Dendritic cell treated with granulocyte-macrophage colony-stimulating factor and Interleukin-4, amounts not matched to agents 40 ng/mL and 50 ng/mL, for 4 days (primary cell): ENCODE measurements at regions of chr1 and their contacts with region 1.

Region 1: GRCh38 chr1:225977937-225978748 is 21.0 kb downstream of the SDE2 start:
- H3K4me3 Mint-ChIP-seq: no peak overlapping the region
- H3K27ac Mint-ChIP-seq: peak overlapping the region; percentile 2
- H3K4me1 Mint-ChIP-seq: peaks cover 30% of the 10 kb centered on the region
- H3K27me3 Mint-ChIP-seq: no peaks in the 10 kb centered on the region

Region 2: GRCh38 chr1:225318706-225319575 is 659.2 kb before region 1 on chr1:
- intact Hi-C with region 1: loop called (anchors 2 kb)
- H3K4me3 Mint-ChIP-seq: no peak overlapping the region
- H3K27ac Mint-ChIP-seq: no peak overlapping the region
- H3K4me1 Mint-ChIP-seq: peaks cover 15% of the 10 kb centered on the region
- H3K27me3 Mint-ChIP-seq: no peaks in the 10 kb centered on the region

Region 3: GRCh38 chr1:225474986-225475820 is 502.9 kb before region 1 on chr1:
- intact Hi-C with region 1: loop called (anchors 1 kb)
- H3K4me3 Mint-ChIP-seq: no peak overlapping the region
- H3K27ac Mint-ChIP-seq: peak overlapping the region; percentile 65
- H3K4me1 Mint-ChIP-seq: peaks cover 26% of the 10 kb centered on the region
- H3K27me3 Mint-ChIP-seq: peaks cover 9% of the 10 kb centered on the region

Region 4: DNA sequence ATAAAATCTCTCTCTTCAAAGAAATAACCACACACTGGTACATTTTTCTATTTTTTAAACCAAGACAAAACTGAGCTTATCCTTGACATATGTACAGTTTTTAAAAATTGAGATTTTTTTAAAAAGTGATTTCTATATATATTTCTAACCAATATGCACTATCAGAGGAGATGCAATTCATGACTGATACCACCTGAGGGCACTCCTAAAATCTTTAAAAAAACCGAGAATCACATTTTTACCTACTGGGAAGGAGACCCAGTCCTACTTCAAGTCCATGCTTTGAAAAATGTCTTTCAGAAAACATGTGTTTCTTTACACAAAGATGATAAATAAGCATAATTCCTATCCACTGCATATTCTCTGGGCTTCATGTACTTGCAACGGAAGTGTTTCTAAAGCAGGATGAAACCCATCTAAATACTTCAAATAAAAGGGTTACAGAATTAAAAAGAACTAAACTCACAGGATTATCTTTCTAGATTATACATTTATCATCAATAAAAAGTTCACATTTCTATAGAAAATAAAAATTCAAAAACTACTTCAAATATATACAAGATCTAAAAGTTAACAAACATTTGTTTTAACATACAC is 423.8 kb before region 1 on chr1:
- intact Hi-C with region 1: loop called (anchors 5 kb)
- H3K4me3 Mint-ChIP-seq: no peak overlapping the region
- H3K27ac Mint-ChIP-seq: no peak overlapping the region
- H3K4me1 Mint-ChIP-seq: peaks cover 2% of the 10 kb centered on the region
- H3K27me3 Mint-ChIP-seq: no peaks in the 10 kb centered on the region

Region 5: GRCh38 chr1:225772323-225772768 is 205.8 kb before region 1 on chr1:
- intact Hi-C with region 1: loop called (anchors 5 kb)
- H3K4me3 Mint-ChIP-seq: no peak overlapping the region
- H3K27ac Mint-ChIP-seq: no peak overlapping the region
- H3K4me1 Mint-ChIP-seq: peaks cover 14% of the 10 kb centered on the region
- H3K27me3 Mint-ChIP-seq: peaks cover 3% of the 10 kb centered on the region

Region 6: GRCh38 chr1:225911191-225912130 is 66.7 kb before region 1 on chr1:
- intact Hi-C with region 1: loop called (anchors 10 kb)
- H3K4me3 Mint-ChIP-seq: no peak overlapping the region
- H3K27ac Mint-ChIP-seq: no peak overlapping the region
- H3K4me1 Mint-ChIP-seq: no peaks in the 10 kb centered on the region
- H3K27me3 Mint-ChIP-seq: peaks cover 4% of the 10 kb centered on the region

Region 7: DNA sequence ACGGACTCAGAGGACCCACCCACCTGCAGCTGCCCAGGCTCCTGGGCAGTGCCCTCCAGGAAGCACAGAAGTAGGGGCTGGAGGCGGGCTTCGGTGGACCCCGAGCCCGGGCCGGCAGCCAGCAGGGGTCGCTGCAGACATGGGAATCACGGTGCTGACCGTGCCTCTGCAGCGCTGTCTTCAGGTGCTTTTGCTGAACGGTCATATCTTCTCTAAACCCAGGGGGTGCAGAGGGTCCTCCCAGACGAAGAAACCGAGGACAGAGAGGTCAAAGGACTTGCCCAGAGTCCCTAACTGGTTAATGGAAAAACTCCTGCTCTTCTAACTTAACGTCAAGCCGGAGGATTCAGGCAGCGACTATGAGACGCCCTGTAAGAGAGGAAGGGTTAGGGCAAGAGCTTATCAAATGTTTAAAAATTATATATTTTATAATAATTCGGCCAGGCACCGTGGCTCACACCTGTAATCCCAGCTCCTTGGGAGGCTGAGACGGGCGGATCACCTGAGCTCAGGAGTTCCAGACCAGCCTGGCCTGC is 15.6 kb before region 1 on chr1:
- intact Hi-C with region 1: no loop called
- H3K4me3 Mint-ChIP-seq: no peak overlapping the region
- H3K27ac Mint-ChIP-seq: no peak overlapping the region
- H3K4me1 Mint-ChIP-seq: peaks cover 7% of the 10 kb centered on the region
- H3K27me3 Mint-ChIP-seq: peaks cover 7% of the 10 kb centered on the region